ENCODE measurements at regions of chr6 and their contacts with region 1.

Region 1: GRCh38 chr6:137283940-137284810 is 65.0 kb upstream of the IFNGR1 start:
- DNase-seq: no peak
- H3K4me3 ChIP-seq: no peak overlapping the region
- H3K27ac ChIP-seq: no peak overlapping the region
- H3K4me1 ChIP-seq: no peaks in the 10 kb centered on the region
- H3K27me3 ChIP-seq: no peaks in the 10 kb centered on the region
- CTCF ChIP-seq: no peak

Region 2: DNA sequence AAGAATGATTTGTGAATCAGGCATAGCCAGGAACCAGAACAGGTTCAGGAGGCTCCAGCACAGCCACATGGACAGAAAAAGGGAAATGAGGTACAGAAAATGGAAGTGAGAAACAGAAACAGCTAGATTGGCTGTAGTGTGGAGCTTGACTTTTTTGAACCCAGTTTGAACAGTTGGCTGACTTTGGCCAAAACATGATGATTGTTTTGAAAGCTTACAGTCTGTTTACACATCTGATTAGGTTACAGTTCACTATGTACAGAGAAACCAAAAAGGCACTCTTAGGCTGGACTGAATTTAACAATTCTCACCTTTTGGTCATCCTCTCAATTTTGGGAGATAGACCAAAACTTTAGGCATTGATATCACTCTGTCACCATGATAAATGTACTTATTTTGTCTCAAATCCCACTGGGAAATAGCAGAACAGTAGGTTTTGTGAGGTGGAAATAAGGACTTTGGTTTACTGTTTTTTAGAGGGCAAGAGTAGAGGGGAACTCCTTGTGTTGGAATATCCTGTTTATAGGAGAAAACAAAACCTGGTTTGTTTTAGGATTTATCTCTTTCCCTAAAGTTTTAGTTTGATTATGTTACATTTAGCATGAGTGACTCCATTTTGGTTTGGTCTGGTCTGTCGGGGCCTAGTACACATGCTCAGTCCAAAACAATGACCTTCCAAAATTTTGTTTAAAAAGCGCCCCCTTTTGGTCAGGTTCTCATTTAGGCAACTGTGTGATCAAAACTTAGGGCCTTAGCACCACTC is 86.9 kb after region 1 on chr6:
- intact Hi-C with region 1: no loop called
- DNase-seq: no peak
- H3K4me3 ChIP-seq: no peak overlapping the region
- H3K27ac ChIP-seq: no peak overlapping the region
- H3K4me1 ChIP-seq: no peaks in the 10 kb centered on the region
- H3K27me3 ChIP-seq: no peaks in the 10 kb centered on the region
- CTCF ChIP-seq: no peak

Region 3: DNA sequence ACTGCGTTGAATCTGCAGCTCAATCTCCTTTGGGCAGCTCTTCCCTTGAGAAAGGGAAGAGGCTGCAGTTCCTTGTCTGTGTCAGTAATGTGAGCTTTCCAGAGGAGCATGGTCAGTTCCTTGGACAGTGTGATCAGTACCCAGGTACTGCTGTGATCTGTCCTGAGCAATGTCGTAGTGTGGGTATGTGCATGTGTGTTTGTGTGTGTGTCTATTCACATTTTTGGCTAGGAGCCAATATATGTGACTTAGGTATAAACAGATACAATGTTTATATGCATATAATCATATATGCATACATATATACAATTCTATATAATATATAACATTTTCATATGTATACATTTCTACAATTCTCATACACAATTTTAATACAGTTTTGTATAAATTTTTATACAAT is 295.4 kb after region 1 on chr6:
- intact Hi-C with region 1: loop called (anchors 5 kb)
- DNase-seq: no peak
- H3K4me3 ChIP-seq: no peak overlapping the region
- H3K27ac ChIP-seq: no peak overlapping the region
- H3K4me1 ChIP-seq: no peaks in the 10 kb centered on the region
- H3K27me3 ChIP-seq: no peaks in the 10 kb centered on the region
- CTCF ChIP-seq: no peak